Activated naive CD8-positive, alpha-beta T cell treated with anti-CD3 and anti-CD28 coated beads, Interleukin-2, amount 10 ng/mL, durations not matched to agents 7 days and 5 days (primary cell): ENCODE measurements at regions of chr6 and their contacts with region 1.

Region 1: GRCh38 chr6:26045065-26045927 is 41.9 kb upstream of the HFE start:
- DNase-seq: peak; percentile 82
- ATAC-seq: peak; percentile 56
- H3K4me3 Mint-ChIP-seq: peak overlapping the region; percentile 86
- H3K27ac Mint-ChIP-seq: peak overlapping the region; percentile 99
- H3K4me1 Mint-ChIP-seq: peaks cover 41% of the 10 kb centered on the region
- H3K27me3 Mint-ChIP-seq: no peaks in the 10 kb centered on the region

Region 2: GRCh38 chr6:26065952-26066380 is 20.7 kb after region 1 on chr6:
- POLR2A ChIA-PET with region 1: interaction called, 10 read pairs
- DNase-seq: no peak
- ATAC-seq: peak; percentile 89
- H3K4me3 Mint-ChIP-seq: no peak overlapping the region
- H3K27ac Mint-ChIP-seq: no peak overlapping the region
- H3K4me1 Mint-ChIP-seq: peaks cover 8% of the 10 kb centered on the region
- H3K27me3 Mint-ChIP-seq: peaks cover 26% of the 10 kb centered on the region

Region 3: DNA sequence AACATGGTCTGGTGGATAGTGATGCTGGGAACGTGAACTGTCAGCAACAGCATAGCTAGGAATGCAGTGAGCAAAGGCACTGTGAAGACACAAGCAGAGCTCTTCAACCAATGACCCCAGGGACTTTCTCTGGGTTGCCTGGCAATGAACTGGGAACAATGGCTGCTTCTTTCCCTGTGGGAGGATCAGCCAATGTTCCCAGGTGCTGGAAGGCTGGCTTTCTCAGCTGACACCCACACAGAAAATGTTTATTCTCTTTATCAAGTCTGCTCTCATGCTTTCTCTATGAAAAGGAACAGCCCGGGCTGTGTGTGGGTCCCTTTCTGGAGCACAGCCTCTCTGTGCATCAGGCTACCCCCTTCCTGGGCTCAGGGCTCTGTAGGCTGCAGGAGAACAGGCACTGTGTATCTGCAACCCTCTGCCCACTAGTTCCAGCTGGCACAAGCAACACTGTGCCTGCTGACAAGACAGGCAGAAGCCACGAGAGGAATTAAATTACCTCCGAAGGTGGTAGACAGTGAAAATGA is 96.1 kb after region 1 on chr6:
- POLR2A ChIA-PET with region 1: no interaction called
- DNase-seq: no peak
- ATAC-seq: no peak
- H3K4me3 Mint-ChIP-seq: no peak overlapping the region
- H3K27ac Mint-ChIP-seq: no peak overlapping the region
- H3K4me1 Mint-ChIP-seq: peaks cover 10% of the 10 kb centered on the region
- H3K27me3 Mint-ChIP-seq: no peaks in the 10 kb centered on the region

Region 4: GRCh38 chr6:26196846-26197648 is 151.8 kb after region 1 on chr6:
- POLR2A ChIA-PET with region 1: interaction called, 181 read pairs
- DNase-seq: peak; percentile 83
- ATAC-seq: peak; percentile 44
- H3K4me3 Mint-ChIP-seq: peak overlapping the region; percentile 87
- H3K27ac Mint-ChIP-seq: peak overlapping the region; percentile 96
- H3K4me1 Mint-ChIP-seq: peaks cover 48% of the 10 kb centered on the region
- H3K27me3 Mint-ChIP-seq: no peaks in the 10 kb centered on the region

Region 5: GRCh38 chr6:26240154-26241032 is 195.1 kb after region 1 on chr6:
- POLR2A ChIA-PET with region 1: interaction called, 82 read pairs
- DNase-seq: peak; percentile 81
- ATAC-seq: peak; percentile 82
- H3K4me3 Mint-ChIP-seq: peak overlapping the region; percentile 85
- H3K27ac Mint-ChIP-seq: peak overlapping the region; percentile 98
- H3K4me1 Mint-ChIP-seq: peaks cover 36% of the 10 kb centered on the region
- H3K27me3 Mint-ChIP-seq: no peaks in the 10 kb centered on the region

Region 6: DNA sequence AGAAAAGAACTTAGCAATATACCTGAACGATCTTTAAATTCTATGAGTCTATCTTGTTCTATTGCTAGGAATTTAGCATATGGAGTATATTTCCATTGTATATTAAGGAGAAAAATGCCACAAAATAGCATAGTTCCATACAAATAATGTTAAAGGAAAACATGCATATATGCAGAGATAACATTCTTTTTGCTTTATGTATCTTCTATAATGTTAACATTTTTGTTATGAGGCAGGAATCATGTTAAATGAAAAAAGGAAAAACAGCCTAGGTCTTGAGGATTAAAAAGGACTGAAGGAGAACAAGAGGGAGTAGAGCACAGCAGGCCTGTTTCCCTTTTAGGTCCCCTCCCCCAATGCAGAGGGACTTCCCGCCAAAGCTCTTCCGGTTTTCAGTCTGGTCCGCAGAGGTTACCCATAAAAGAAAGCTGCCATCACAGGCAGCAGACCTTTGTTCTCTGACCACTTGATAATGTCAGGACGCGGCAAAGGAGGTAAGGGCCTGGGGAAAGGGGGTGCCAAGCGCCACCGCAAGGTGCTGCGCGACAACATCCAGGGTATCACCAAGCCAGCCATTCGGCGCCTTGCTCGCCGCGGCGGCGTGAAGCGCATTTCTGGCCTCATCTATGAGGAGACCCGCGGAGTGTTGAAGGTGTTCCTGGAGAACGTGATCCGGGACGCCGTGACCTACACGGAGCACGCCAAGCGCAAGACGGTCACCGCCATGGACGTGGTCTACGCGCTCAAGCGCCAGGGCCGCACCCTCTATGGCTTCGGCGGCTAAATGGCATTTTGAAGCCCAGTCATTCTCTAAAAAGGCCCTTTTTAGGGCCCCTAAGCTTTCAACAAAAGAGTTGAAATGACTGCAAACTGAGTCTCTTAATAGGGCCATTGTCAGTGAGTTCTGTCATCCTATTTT is 1093.8 kb after region 1 on chr6:
- POLR2A ChIA-PET with region 1: interaction called, 12 read pairs
- DNase-seq: peak; percentile 81
- ATAC-seq: peak; percentile 73
- H3K4me3 Mint-ChIP-seq: peak overlapping the region; percentile 95
- H3K27ac Mint-ChIP-seq: peak overlapping the region; percentile 98
- H3K4me1 Mint-ChIP-seq: peaks cover 39% of the 10 kb centered on the region
- H3K27me3 Mint-ChIP-seq: no peaks in the 10 kb centered on the region

Region 7: GRCh38 chr6:27864906-27865849 is 1819.9 kb after region 1 on chr6:
- POLR2A ChIA-PET with region 1: interaction called, 68 read pairs
- DNase-seq: peak; percentile 83
- ATAC-seq: peak; percentile 56
- H3K4me3 Mint-ChIP-seq: peak overlapping the region; percentile 99
- H3K27ac Mint-ChIP-seq: peak overlapping the region; percentile 100
- H3K4me1 Mint-ChIP-seq: peaks cover 57% of the 10 kb centered on the region
- H3K27me3 Mint-ChIP-seq: no peaks in the 10 kb centered on the region